ENCODE measurements at regions of chr3 and their contacts with region 1.

Region 1: DNA sequence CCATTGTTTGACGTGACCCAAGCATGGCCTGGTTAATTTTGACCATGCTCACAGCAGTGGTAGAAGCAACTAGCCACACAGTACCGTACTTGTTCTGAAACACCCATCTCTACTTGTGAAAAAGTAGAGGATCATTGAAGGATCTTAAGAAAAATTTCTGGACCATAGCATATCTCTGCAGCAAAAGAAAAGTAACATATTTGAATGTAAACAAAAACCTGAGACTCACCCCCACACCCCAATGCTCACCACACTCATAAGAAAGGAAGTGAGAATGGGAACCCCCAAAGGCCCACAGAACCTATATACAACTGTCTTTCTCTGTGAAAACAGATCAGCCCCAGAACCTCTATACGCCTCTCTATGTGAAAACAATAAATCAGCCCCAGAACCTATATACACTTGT is 33.8 kb upstream of the TFRC start:
- DNase-seq: no peak
- H3K4me3 ChIP-seq: no peak overlapping the region
- H3K27ac ChIP-seq: no peak overlapping the region
- H3K4me1 ChIP-seq: peaks cover 12% of the 10 kb centered on the region
- H3K27me3 ChIP-seq: no peaks in the 10 kb centered on the region
- CTCF ChIP-seq: no peak

Region 2: DNA sequence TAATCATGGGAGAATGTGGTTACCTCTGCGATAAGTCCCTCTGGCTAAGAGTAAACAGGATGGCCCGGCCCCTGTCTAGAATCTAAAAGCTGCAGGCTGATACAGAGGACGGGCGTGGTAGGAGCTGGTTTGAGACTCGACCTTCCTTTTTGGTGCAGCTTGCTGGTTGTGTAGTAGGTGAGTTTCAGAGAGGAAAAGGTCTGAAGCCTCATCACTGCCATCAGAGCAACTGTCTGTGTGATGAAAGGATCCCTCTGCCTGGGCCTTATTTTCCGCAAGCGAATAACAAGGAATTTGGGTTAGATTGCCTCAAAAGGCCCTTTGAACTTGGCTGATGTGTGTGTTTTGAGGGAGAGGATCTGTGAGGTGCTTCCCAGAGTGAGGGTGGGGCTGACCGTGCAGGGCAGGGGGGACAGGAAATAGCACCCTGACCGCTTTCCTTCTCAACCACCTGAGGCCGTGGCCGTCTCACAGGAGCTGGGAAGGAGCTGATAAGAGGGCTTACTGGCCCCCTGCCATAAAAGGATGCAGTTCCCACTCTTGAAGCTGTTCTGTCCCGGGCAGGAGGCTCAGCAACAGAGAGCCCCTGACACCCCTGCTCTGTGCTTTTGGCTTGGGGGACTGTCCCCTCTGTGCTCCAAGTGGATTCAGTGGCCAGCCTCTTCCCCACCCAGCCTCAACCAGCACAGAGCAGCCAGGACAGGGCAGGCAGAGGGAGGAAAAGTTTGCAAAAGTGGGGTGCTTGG is 11.8 kb after region 1 on chr3:
- CTCF ChIA-PET with region 1: no interaction called
- POLR2A ChIA-PET with region 1: interaction called, 25 read pairs
- intact Hi-C with region 1: no loop called
- DNase-seq: peak; percentile 51 to 54
- H3K4me3 ChIP-seq: no peak overlapping the region
- H3K27ac ChIP-seq: peak overlapping the region; percentile 66
- H3K4me1 ChIP-seq: peaks cover 26% of the 10 kb centered on the region
- H3K27me3 ChIP-seq: no peaks in the 10 kb centered on the region
- CTCF ChIP-seq: no peak

Measured in PC-9 (cell line).